ENCODE measurements at regions of chr1 and their contacts with region 1.

Region 1: DNA sequence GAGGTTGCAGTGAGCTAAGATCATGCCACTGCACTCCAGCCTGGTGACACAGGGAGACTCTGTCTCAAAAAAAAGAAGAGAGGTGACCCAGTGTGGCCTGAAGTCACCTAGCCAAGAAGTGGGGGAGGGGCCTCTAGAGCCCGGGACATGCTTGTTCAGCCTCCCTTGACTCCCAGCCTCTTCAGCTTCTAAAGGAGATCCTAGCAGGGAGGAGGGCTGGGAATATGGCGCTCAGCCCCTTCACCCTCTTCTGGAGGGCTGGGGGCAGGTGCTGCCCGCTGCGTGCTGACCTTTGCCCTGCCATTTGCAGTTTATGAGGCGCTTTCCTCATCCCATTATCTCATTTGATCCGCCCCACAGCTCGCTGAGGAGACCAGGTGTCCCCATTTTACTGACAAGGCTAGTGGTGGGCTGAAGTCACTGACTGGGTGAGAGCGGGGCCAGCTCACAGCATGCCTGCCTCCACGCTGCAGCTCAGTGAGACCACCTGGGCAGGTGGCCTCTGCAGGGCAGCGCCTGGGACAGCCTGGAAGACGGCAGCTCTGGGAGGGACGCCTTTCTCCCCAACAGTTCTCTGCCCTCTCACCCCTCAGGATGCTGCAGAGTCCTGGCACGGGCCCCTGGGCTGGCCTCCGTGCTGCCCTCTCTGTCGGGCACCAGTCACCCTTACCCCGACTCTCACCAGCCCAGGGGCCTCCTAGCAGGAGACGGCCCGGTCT is 7.5 kb downstream of the ELF3 start:
- DNase-seq: no peak
- ATAC-seq: peak; percentile 67
- H3K4me3 ChIP-seq: peak overlapping the region in 1 of 2 experiments; percentile 46; a peak in 3 of 4 replicates
- H3K27ac ChIP-seq: peak overlapping the region; percentile 84
- H3K4me1 ChIP-seq: peaks cover 70% of the 10 kb centered on the region
- H3K27me3 ChIP-seq: no peaks in the 10 kb centered on the region
- CTCF ChIP-seq: no peak

Region 2: DNA sequence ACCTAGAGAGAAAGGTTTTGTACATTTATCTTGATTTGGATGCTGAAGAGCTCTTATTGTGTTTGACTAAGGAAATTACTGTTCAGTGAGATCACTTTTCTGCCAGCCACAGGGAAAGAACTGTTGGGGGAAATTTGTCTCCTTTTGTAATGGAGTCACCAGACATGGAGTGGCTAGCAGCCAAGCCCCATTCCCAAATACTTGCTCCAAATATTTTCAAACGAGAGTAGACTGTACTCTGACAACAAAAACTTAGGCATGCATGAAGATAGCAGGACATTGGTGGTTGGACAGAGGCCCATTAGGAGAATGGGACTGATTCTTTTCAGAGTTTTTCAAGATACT is 167.9 kb before region 1 on chr1:
- CTCF ChIA-PET with region 1: no interaction called
- POLR2A ChIA-PET with region 1: no interaction called
- in situ Hi-C with region 1: no loop called
- intact Hi-C with region 1: no loop called
- DNase-seq: peak; percentile 53
- ATAC-seq: peak; percentile 37; the same call in 1 of the 2 replicates
- H3K4me3 ChIP-seq: no peak overlapping the region
- H3K27ac ChIP-seq: no peak overlapping the region
- H3K4me1 ChIP-seq: no peaks in the 10 kb centered on the region
- H3K27me3 ChIP-seq: no peaks in the 10 kb centered on the region
- CTCF ChIP-seq: no peak

Region 3: DNA sequence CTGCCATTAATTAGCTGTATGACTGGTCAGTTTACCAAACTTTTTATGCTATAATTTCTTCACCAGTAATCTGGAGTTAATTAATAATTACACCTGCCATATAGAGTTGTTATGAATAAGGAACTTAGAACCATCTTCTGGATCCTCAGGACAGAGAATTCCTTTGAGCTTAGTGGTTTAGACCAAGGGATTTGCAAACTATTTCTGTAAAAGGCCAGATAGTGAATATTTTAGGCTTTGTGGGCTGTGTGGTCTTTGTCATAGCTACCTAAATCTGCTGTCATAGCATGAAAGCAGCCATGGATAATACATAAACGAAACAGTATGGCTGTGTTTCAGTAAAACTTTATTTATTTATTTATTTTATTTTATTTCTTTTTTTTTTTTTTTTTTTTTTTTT is 53.6 kb before region 1 on chr1:
- CTCF ChIA-PET with region 1: no interaction called
- POLR2A ChIA-PET with region 1: no interaction called
- in situ Hi-C with region 1: no loop called
- intact Hi-C with region 1: no loop called
- DNase-seq: no peak
- ATAC-seq: no peak
- H3K4me3 ChIP-seq: no peak overlapping the region
- H3K27ac ChIP-seq: no peak overlapping the region
- H3K4me1 ChIP-seq: no peaks in the 10 kb centered on the region
- H3K27me3 ChIP-seq: no peaks in the 10 kb centered on the region
- CTCF ChIP-seq: no peak

Region 4: GRCh38 chr1:202034683-202035462 is 17.0 kb after region 1 on chr1:
- CTCF ChIA-PET with region 1: no interaction called
- POLR2A ChIA-PET with region 1: interaction called, 12 read pairs
- in situ Hi-C with region 1: no loop called
- intact Hi-C with region 1: no loop called
- DNase-seq: no peak
- ATAC-seq: peak; percentile 86
- H3K4me3 ChIP-seq: no peak overlapping the region
- H3K27ac ChIP-seq: peak overlapping the region; percentile 76
- H3K4me1 ChIP-seq: peaks cover 20% of the 10 kb centered on the region
- H3K27me3 ChIP-seq: no peaks in the 10 kb centered on the region
- CTCF ChIP-seq: no peak

Region 5: DNA sequence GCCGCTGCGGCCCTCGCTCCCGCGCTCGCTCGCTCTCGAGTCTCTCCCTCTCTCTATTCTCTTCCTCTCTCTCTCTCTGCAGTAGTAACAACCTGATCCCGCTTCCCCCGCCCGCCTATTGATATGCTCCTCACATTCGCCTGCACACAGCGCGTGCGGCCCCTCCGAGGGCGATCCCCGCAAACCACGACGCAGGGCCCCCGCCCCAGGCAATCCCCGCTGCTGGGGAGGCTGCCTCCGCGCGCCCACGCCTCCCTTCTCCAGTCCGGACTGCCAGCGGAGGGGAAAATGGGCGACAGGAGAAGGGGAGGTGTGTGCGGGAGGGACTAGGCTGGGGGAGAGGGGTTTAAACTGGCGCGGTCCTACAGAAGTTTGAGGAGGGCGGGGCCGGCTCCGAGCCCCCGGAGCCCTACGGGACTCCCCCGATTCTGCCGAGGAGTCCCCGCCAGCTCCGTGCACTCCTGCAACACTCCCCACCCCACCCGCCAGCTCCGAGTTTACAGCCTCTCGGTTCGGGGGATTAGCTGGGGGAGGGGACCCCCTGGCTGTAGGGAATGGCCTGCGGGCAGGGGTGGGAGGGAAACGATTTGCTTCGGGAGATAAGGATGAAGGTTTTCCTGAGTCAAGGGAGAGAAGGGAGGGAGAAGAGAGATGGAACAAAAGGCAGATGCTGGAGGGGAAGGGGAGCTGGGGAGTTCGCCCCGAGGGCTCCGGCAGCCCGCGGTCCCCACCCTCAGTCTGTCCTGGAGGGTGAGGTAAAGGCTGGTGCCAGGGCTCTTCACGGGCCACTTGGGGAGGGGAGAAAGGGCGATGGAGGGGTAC is 625.7 kb after region 1 on chr1:
- CTCF ChIA-PET with region 1: no interaction called
- POLR2A ChIA-PET with region 1: no interaction called
- in situ Hi-C with region 1: no loop called
- intact Hi-C with region 1: no loop called
- DNase-seq: no peak
- ATAC-seq: peak; percentile 53; the same call in 1 of the 2 replicates
- H3K4me3 ChIP-seq: peak overlapping the region; percentile 17 to 39; a peak in 3 of 4 replicates
- H3K27ac ChIP-seq: no peak overlapping the region
- H3K4me1 ChIP-seq: 0 out of 2 replicates have a peak, but pooled peaks cover 7% of the 10 kb centered on the region
- H3K27me3 ChIP-seq: peaks cover 3% of the 10 kb centered on the region; the same call in 1 of the 2 replicates
- CTCF ChIP-seq: no peak

Measured in Panc1 (cell line).